Keratinocyte (primary cell): ENCODE measurements at regions of chr12 and their contacts with region 1.

Region 1: DNA sequence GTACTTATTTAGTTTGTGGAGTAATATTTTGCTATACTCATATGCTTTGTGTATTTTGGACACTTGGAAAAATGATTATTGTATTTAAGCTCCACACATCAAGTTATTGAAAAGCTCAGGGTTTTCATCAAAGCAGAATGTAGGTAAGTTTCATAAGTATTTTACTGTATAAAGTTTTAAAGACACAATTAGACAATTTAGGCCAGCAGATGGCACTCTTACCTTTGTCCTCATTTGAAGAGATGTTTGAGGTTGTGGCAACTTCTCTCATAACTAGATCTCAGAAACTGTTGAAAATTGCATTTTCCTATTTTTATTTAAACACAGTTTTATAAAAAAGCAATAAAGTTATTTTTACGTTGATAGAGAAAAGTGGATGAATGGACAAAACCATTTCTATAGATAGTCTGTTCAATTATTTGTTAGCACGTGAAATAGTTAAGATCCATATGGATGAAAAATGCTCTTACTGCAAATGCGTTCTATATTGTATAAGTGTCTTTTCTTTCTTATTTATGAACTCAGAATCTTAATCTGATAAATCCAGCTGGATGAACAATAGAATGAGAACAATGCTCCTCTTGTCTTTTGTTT is 300.0 kb downstream of the AEBP2 start:
- DNase-seq: no peak
- H3K4me3 ChIP-seq: no peak overlapping the region
- H3K27ac ChIP-seq: no peak overlapping the region
- H3K4me1 ChIP-seq: no peaks in the 10 kb centered on the region
- H3K27me3 ChIP-seq: no peaks in the 10 kb centered on the region
- CTCF ChIP-seq: peak in 2 of 3 experiments; percentile 35 to 38

Region 2: DNA sequence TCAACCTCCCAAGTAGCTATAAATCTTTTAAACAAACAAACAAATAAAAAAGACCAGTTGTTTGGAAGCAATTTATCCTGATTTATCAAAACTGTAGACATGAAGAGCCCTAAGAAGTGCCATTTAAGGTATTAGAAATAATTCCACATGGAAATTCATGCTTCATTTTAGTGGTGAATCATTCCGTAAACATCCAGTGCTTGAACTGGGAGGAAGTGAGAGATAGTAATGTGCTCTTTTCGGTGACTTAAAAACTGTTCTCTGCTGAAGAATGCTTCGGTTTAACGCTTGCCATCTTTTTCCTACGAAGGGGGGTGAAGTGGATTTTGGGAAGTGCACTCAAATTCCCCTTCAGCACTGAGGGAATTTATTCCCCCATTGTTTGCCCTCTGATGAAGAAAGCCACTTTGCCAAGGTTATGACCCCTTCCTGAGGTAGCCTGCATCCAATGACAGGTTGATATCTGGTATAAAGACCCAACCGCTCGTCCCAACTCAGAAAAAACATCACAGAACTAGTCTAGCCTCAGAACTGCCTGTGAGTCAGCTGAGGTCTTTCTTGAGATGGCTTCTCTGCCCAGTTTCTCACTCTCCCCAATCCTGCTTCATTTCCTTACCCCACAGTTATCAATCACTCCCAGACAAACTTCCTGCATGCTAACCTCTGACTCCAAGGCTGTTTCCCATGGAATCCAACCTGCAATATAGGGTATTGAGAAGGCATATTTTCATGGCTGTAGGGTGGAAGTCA is 55.9 kb before region 1 on chr12:
- dilution Hi-C with region 1: no loop called
- DNase-seq: no peak
- H3K4me3 ChIP-seq: no peak overlapping the region
- H3K27ac ChIP-seq: no peak overlapping the region
- H3K4me1 ChIP-seq: peaks cover 11% of the 10 kb centered on the region
- H3K27me3 ChIP-seq: no peaks in the 10 kb centered on the region
- CTCF ChIP-seq: no peak

Region 3: GRCh38 chr12:19915392-19916195 is 176.3 kb after region 1 on chr12:
- dilution Hi-C with region 1: loop called (anchors 25 kb)
- DNase-seq: no peak
- H3K4me3 ChIP-seq: no peak overlapping the region
- H3K27ac ChIP-seq: no peak overlapping the region
- H3K4me1 ChIP-seq: no peaks in the 10 kb centered on the region
- H3K27me3 ChIP-seq: no peaks in the 10 kb centered on the region
- CTCF ChIP-seq: peak in 2 of 3 experiments; percentile 28 to 32